Naive thymus-derived CD4-positive, alpha-beta T cell (primary cell): ENCODE measurements at regions of chr7 and their contacts with region 1.

Region 1: GRCh38 chr7:143287935-143288826 is at the start of gene CASP2:
- DNase-seq: peak; percentile 98 to 99 (median 99)
- ATAC-seq: peak; percentile 97
- H3K4me3 ChIP-seq: peak within 1 kb of the TSS; percentile 92
- H3K4me3 Mint-ChIP-seq: peak within 1 kb of the TSS; percentile 88 to 99 (median 95)
- H3K27ac ChIP-seq: peak within 1 kb of the TSS; percentile 85
- H3K27ac Mint-ChIP-seq: peak within 1 kb of the TSS; percentile 86 to 95 (median 93)
- H3K4me1 ChIP-seq: peaks cover 13 to 35% of the 10 kb centered on the region in 2 donors
- H3K4me1 Mint-ChIP-seq: peaks cover 41 to 66% (median 59%) of the 10 kb centered on the region in 7 donors
- H3K27me3 ChIP-seq: no peaks in the 10 kb centered on the region
- H3K27me3 Mint-ChIP-seq: no peaks in the 10 kb centered on the region
- total RNA-seq, gene CASP2: 29.6 to 97.7 (median 69.1) TPM

Region 2: GRCh38 chr7:142842251-142842766 is 445.9 kb before region 1 on chr7:
- CTCF ChIA-PET with region 1: no interaction called
- POLR2A ChIA-PET with region 1: no interaction called
- intact Hi-C with region 1: no loop called
- DNase-seq: no peak
- ATAC-seq: no peak
- H3K4me3 ChIP-seq: no peak overlapping the region
- H3K4me3 Mint-ChIP-seq: no peak overlapping the region
- H3K27ac ChIP-seq: no peak overlapping the region
- H3K27ac Mint-ChIP-seq: no peak overlapping the region
- H3K4me1 ChIP-seq: no peaks in the 10 kb centered on the region
- H3K4me1 Mint-ChIP-seq: no peaks in the 10 kb centered on the region
- H3K27me3 ChIP-seq: no peaks in the 10 kb centered on the region
- H3K27me3 Mint-ChIP-seq: peaks cover 0 to 13% (median 0%) of the 10 kb centered on the region in 5 donors

Region 3: DNA sequence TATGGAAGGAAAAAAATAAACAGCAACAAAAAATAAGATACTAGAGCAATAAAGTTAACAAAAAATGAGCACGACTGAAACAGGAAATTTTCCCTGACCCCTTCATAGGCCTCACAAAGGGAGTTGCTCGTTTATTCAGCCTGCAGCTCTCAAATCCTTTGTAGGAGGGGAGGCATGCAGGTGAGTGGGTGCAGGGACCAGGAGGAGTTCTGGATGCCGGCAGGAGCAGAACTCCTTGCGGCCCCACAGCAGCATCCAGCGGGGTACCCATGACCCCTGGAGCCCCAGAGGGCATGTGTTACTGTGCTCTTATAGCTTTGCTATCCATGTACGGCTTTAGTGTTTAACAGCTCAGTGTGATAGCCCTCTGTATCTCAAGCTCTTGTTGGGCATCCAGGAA is 99.2 kb before region 1 on chr7:
- CTCF ChIA-PET with region 1: no interaction called
- POLR2A ChIA-PET with region 1: no interaction called
- intact Hi-C with region 1: no loop called
- DNase-seq: no peak
- ATAC-seq: no peak
- H3K4me3 ChIP-seq: no peak overlapping the region
- H3K4me3 Mint-ChIP-seq: no peak overlapping the region
- H3K27ac ChIP-seq: no peak overlapping the region
- H3K27ac Mint-ChIP-seq: no peak overlapping the region
- H3K4me1 ChIP-seq: no peaks in the 10 kb centered on the region
- H3K4me1 Mint-ChIP-seq: no peaks in the 10 kb centered on the region
- H3K27me3 ChIP-seq: no peaks in the 10 kb centered on the region
- H3K27me3 Mint-ChIP-seq: peaks cover 11 to 19% (median 14%) of the 10 kb centered on the region in 5 donors

Region 4: GRCh38 chr7:143248761-143249354 is 39.3 kb before region 1 on chr7:
- CTCF ChIA-PET with region 1: interaction called, 4 read pairs
- POLR2A ChIA-PET with region 1: interaction called, 7 read pairs
- intact Hi-C with region 1: loop called (anchors 1 to 2 kb)
- DNase-seq: no peak
- ATAC-seq: no peak
- H3K4me3 ChIP-seq: peak overlapping the region; percentile 13
- H3K4me3 Mint-ChIP-seq: peak overlapping the region in 9 of 10 donors; percentile 12 to 68 (median 34)
- H3K27ac ChIP-seq: no peak overlapping the region
- H3K27ac Mint-ChIP-seq: peak overlapping the region; percentile 25 to 89 (median 80)
- H3K4me1 ChIP-seq: peaks cover 56 to 60% of the 10 kb centered on the region in 2 donors
- H3K4me1 Mint-ChIP-seq: peaks cover 60 to 99% (median 97%) of the 10 kb centered on the region in 7 donors
- H3K27me3 ChIP-seq: no peaks in the 10 kb centered on the region
- H3K27me3 Mint-ChIP-seq: no peaks in the 10 kb centered on the region

Region 5: GRCh38 chr7:143299840-143300239 is 11.7 kb after region 1 on chr7:
- CTCF ChIA-PET with region 1: interaction called, 9 read pairs
- POLR2A ChIA-PET with region 1: interaction called, 8 read pairs
- intact Hi-C with region 1: loop called (anchors 1 kb)
- DNase-seq: peak; percentile 39 to 73 (median 59)
- ATAC-seq: peak; percentile 93
- H3K4me3 ChIP-seq: no peak overlapping the region
- H3K4me3 Mint-ChIP-seq: peak overlapping the region in 3 of 10 donors; percentile 3 to 19 (median 15)
- H3K27ac ChIP-seq: no peak overlapping the region
- H3K27ac Mint-ChIP-seq: peak overlapping the region in 8 of 9 donors; percentile 12 to 84 (median 40)
- H3K4me1 ChIP-seq: peaks cover 7 to 10% of the 10 kb centered on the region in 2 donors
- H3K4me1 Mint-ChIP-seq: peaks cover 31 to 72% (median 44%) of the 10 kb centered on the region in 7 donors
- H3K27me3 ChIP-seq: no peaks in the 10 kb centered on the region
- H3K27me3 Mint-ChIP-seq: no peaks in the 10 kb centered on the region

Region 6: DNA sequence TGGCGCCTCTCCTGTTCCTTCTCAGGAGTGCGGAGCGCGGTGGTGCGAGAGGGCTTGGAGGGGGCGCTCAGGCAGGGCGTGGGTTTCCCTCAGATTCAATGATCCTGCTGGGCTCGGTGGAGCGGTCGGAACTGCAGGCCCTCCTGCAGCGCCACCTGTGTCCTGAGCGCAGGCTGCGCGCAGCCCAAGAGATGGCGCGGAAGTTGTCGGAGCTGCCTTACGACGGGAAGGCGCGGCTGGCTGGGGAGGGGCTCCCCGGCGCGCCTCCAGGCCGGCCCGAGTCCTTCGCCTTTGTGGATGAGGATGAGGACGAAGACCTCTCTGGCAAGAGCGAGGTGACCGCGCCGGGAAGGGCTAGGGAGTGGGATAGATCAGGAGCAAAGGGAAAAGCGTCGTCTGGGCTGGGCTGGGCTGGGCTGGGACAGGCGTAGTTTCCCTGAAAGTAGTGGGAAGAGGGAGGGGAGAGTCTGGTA is 57.3 kb after region 1 on chr7:
- CTCF ChIA-PET with region 1: no interaction called
- POLR2A ChIA-PET with region 1: no interaction called
- intact Hi-C with region 1: loop called in 1 of 2 experiments (anchors 2 kb)
- DNase-seq: peak; percentile 31 to 62 (median 56)
- ATAC-seq: peak; percentile 98
- H3K4me3 ChIP-seq: peak overlapping the region; percentile 29
- H3K4me3 Mint-ChIP-seq: peak overlapping the region; percentile 56 to 87 (median 76)
- H3K27ac ChIP-seq: no peak overlapping the region
- H3K27ac Mint-ChIP-seq: peak overlapping the region in 3 of 9 donors; percentile 3 to 79 (median 56)
- H3K4me1 ChIP-seq: peaks cover 0 to 4% of the 10 kb centered on the region in 2 donors
- H3K4me1 Mint-ChIP-seq: peaks cover 5 to 13% (median 9%) of the 10 kb centered on the region in 7 donors
- H3K27me3 ChIP-seq: no peaks in the 10 kb centered on the region
- H3K27me3 Mint-ChIP-seq: peaks cover 0 to 57% (median 2%) of the 10 kb centered on the region in 5 donors

Region 7: DNA sequence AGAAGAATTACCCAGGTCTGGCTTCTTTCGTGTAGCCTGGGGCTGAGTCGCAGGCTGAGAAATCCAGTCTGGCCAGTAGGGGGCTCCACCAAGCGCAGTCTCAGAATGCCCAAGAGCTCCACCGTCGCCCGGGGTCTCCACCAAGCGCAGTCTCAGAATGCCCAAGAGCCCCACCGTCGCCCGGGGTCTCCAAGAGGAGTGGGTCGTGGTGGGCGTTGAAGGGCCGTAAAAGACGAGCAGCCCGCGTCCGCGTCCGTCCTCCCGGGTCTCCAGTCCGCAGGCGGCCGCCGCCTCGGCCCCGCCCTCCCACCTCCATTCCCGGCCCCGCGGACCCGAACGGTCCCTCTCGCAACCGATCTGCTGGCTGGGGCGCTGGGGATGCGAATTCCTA is 92.1 kb after region 1 on chr7:
- CTCF ChIA-PET with region 1: no interaction called
- POLR2A ChIA-PET with region 1: interaction called, 13 read pairs
- intact Hi-C with region 1: loop called (anchors 1 kb)
- DNase-seq: peak; percentile 76 to 90 (median 84)
- ATAC-seq: peak; percentile 73
- H3K4me3 ChIP-seq: peak overlapping the region; percentile 92
- H3K4me3 Mint-ChIP-seq: peak overlapping the region in 9 of 10 donors; percentile 84 to 96 (median 91)
- H3K27ac ChIP-seq: peak overlapping the region; percentile 91
- H3K27ac Mint-ChIP-seq: peak overlapping the region; percentile 90 to 96 (median 93)
- H3K4me1 ChIP-seq: peaks cover 58 to 70% of the 10 kb centered on the region in 2 donors
- H3K4me1 Mint-ChIP-seq: peaks cover 35 to 46% (median 42%) of the 10 kb centered on the region in 7 donors
- H3K27me3 ChIP-seq: no peaks in the 10 kb centered on the region
- H3K27me3 Mint-ChIP-seq: no peaks in the 10 kb centered on the region